ENCODE measurements at regions of chr11 and their contacts with region 1.

Region 1: DNA sequence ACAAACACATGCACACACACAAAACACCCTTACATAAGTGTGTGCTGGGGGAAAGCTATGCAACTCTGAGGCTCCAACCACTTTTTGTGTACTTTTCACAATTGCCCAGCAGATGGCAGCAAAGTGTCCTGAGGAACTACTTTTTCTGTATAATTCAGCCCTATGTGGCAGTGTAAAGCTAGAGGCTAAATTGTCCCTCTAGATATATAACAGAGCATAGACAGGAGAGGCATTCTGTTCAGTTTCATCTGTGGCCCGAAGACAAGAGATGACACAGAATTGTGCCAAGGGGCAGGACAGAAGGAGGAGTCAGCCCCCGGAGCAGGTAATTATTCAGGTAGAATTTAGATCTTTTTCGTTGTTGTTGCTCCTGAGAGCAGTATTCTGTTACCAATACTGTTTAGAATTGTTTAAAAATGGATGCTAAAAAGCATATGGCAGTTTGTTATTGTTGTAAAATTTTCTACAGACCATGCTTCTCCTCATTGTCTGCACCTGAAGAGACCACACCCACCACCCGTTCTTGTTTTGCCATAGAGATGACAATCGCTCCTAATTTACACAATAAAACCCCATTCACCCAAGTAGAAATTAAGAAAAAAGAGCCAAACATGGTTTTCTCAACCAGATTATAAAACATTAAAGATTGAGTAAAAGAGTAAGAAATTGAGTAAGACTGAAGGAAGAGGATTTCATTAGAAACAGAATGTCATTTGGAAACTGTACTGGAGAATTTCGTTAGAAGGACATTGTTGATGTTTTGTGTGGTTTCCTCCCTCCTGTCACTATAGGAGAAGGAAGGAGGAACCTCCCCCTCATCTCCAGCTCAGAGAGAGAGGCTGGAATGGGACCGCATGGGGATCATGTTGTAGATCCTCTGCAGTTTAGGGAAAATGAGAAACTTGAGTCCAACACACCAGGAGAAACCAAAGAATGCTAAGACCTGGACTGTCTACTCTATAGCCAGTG is 14.5 kb upstream of the MS4A7 start:
- DNase-seq: peak; percentile 66
- ATAC-seq: peak; percentile 39
- H3K4me3 Mint-ChIP-seq: no peak overlapping the region
- H3K27ac Mint-ChIP-seq: no peak overlapping the region
- H3K4me1 Mint-ChIP-seq: no peaks in the 10 kb centered on the region
- H3K27me3 Mint-ChIP-seq: peaks cover 41% of the 10 kb centered on the region

Region 2: DNA sequence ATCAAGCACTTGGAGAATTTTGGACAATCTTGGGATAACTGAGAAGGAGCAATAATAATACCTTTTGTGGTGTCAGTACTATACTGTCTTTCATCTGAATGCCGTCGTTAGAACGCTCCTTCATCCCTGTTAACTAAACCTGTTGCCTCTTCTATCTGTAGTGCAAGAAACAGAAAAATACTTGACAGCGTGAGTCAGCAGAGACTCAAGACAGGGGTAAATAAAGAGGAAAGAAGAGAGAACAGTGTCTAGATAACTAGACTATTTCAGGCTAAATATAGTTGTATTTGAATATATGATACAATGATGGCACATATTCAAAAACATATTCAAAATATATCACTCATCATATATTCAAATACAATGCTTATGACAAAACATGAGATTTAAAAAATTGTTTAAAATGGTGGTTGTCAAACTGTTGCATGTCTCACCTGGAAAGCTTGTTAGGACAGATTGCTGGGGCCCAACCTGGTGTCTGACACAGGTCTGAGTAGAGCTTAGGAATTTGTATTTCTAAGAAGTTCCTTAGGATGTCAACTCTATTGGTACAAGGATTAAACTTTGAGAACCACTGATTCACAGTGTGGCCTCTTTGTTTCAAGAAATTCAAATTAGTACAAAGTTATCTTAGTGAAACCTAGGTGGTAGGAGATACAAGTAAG is 382.6 kb before region 1 on chr11:
- CTCF ChIA-PET with region 1: no interaction called
- DNase-seq: no peak
- ATAC-seq: no peak
- H3K4me3 Mint-ChIP-seq: no peak overlapping the region
- H3K27ac Mint-ChIP-seq: no peak overlapping the region
- H3K4me1 Mint-ChIP-seq: no peaks in the 10 kb centered on the region
- H3K27me3 Mint-ChIP-seq: peaks cover 2% of the 10 kb centered on the region

Region 3: DNA sequence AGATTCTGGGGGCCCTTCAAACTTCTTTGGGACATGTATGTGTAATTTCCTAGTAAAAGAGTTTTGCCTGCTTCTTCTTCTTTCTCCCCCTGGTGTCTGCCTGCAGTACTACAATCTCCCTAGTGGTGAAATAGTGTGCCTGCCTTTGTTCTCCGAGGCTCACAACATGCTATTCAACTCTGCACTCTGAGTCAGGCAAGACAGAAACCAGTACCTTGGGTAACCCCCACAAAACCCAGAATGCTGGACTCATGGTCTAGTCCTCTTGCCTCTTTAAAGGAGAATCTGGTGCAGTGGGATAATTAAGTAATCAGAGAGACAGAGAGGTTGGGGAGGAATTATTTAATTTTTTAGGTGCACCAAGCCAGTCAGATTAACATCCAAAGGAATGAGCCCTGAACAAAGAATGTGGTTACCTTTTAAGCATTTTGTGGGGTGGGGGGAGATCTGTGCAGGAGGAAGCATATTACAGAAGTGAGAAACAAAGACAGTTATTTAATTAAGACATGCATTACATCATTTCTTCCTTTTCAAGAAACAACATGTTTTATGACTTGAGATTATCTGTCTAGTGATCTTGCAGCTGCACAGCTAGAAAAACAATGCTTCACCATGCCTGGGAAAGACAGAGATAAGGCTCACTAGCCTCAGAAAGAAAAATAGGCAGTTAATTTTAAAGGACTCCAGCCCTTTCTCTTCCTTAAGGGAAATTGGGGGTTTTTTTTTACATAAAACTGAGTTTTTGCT is 170.0 kb before region 1 on chr11:
- CTCF ChIA-PET with region 1: no interaction called
- DNase-seq: peak; percentile 71
- ATAC-seq: peak; percentile 71
- H3K4me3 Mint-ChIP-seq: no peak overlapping the region
- H3K27ac Mint-ChIP-seq: no peak overlapping the region
- H3K4me1 Mint-ChIP-seq: peaks cover 9% of the 10 kb centered on the region
- H3K27me3 Mint-ChIP-seq: peaks cover 19% of the 10 kb centered on the region

Region 4: GRCh38 chr11:60334005-60334620 is 29.7 kb before region 1 on chr11:
- CTCF ChIA-PET with region 1: interaction called, 10 read pairs
- DNase-seq: peak; percentile 68
- ATAC-seq: peak; percentile 65
- H3K4me3 Mint-ChIP-seq: no peak overlapping the region
- H3K27ac Mint-ChIP-seq: no peak overlapping the region
- H3K4me1 Mint-ChIP-seq: peaks cover 9% of the 10 kb centered on the region
- H3K27me3 Mint-ChIP-seq: peaks cover 32% of the 10 kb centered on the region

Region 5: DNA sequence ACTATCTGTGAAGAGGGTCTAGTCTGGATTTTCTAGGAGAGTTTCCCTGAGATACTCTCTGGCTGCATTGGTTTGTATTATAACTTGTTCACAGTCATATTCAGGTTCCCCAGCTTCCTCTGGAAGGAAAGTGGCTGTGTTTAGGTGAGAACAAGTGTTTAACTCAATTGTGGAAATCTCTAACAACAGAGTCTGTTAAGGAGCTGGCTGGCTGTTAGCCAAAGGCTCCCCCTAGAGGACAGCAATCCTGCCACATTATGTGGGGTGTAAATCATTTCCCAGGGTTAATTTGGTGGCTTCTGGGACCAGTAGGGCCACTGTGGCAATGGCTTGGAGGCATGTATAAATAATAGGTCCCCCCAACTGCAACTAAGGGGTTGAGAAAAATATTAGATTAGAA is 18.3 kb before region 1 on chr11:
- CTCF ChIA-PET with region 1: interaction called, 16 read pairs
- DNase-seq: no peak
- ATAC-seq: peak; percentile 39
- H3K4me3 Mint-ChIP-seq: no peak overlapping the region
- H3K27ac Mint-ChIP-seq: no peak overlapping the region
- H3K4me1 Mint-ChIP-seq: no peaks in the 10 kb centered on the region
- H3K27me3 Mint-ChIP-seq: peaks cover 33% of the 10 kb centered on the region

Region 6: GRCh38 chr11:60469723-60470122 is 105.9 kb after region 1 on chr11:
- CTCF ChIA-PET with region 1: no interaction called
- DNase-seq: no peak
- ATAC-seq: no peak
- H3K4me3 Mint-ChIP-seq: no peak overlapping the region
- H3K27ac Mint-ChIP-seq: no peak overlapping the region
- H3K4me1 Mint-ChIP-seq: no peaks in the 10 kb centered on the region
- H3K27me3 Mint-ChIP-seq: peaks cover 35% of the 10 kb centered on the region

Region 7: GRCh38 chr11:60485986-60486385 is 122.2 kb after region 1 on chr11:
- CTCF ChIA-PET with region 1: interaction called, 15 read pairs
- DNase-seq: peak; percentile 47
- ATAC-seq: peak; percentile 76
- H3K4me3 Mint-ChIP-seq: no peak overlapping the region
- H3K27ac Mint-ChIP-seq: no peak overlapping the region
- H3K4me1 Mint-ChIP-seq: no peaks in the 10 kb centered on the region
- H3K27me3 Mint-ChIP-seq: peaks cover 9% of the 10 kb centered on the region

Region 8: DNA sequence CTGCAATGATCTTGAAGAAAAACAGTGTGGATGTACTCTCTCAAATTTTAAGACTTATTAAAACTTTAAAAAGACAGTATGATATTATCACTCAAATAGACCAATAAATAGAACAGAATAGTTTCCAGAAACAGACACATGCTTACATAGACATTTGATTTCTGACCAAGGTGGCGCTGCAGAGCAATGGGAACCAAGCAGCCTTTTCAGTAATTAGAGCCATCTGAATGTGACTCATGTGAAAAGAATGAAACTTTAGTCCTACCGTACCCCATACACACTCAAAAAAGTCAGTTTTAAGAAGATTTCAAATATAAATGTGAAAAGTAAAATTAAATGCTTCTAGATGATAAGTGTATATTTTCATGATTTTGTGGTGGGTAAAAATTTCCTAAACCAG is 261.4 kb after region 1 on chr11:
- CTCF ChIA-PET with region 1: interaction called, 26 read pairs
- DNase-seq: no peak
- ATAC-seq: no peak
- H3K4me3 Mint-ChIP-seq: no peak overlapping the region
- H3K27ac Mint-ChIP-seq: no peak overlapping the region
- H3K4me1 Mint-ChIP-seq: no peaks in the 10 kb centered on the region
- H3K27me3 Mint-ChIP-seq: no peaks in the 10 kb centered on the region

Region 9: DNA sequence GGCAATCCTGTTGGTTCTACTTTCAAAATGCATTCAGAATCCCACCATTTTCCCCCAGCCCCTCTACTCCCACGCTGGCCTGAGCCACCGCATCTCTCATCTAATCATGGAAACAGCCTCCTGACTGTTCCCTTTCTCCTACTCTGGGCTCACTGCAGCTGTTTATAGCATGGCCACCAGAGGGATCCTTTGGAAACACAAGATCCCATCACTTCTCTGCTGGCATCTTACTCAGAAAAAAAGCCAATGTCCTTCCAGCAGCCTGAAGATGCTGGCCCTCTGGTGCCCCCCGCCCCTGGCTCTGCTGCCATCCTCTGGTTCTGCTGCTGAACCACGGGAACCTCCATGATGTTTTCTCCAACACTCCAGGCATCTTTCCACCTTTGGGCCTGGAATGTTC is 346.7 kb after region 1 on chr11:
- CTCF ChIA-PET with region 1: no interaction called
- DNase-seq: no peak
- ATAC-seq: no peak
- H3K4me3 Mint-ChIP-seq: no peak overlapping the region
- H3K27ac Mint-ChIP-seq: no peak overlapping the region
- H3K4me1 Mint-ChIP-seq: no peaks in the 10 kb centered on the region
- H3K27me3 Mint-ChIP-seq: peaks cover 16% of the 10 kb centered on the region

Measured in activated CD8-positive, alpha-beta memory T cell treated with anti-CD3 and anti-CD28 coated beads, Interleukin-2, amount 10 ng/mL, durations not matched to agents 7 days and 5 days (primary cell).